Ovary (tissue), 10 donors: ENCODE measurements at regions of chr12 and their contacts with region 1.

Region 1: GRCh38 chr12:106126441-106127337 is 12.1 kb downstream of the NUAK1 start:
- DNase-seq: peak in 1 of 5 donors; percentile 55
- H3K4me3 ChIP-seq: no peak overlapping the region
- H3K27ac ChIP-seq: peak overlapping the region in 1 of 2 donors; percentile 26
- H3K4me1 ChIP-seq: peaks cover 12% of the 10 kb centered on the region
- H3K27me3 ChIP-seq: no peaks in the 10 kb centered on the region
- CTCF ChIP-seq: no peak
- EP300 ChIP-seq: no peak
- POLR2A ChIP-seq: no peak

Region 2: DNA sequence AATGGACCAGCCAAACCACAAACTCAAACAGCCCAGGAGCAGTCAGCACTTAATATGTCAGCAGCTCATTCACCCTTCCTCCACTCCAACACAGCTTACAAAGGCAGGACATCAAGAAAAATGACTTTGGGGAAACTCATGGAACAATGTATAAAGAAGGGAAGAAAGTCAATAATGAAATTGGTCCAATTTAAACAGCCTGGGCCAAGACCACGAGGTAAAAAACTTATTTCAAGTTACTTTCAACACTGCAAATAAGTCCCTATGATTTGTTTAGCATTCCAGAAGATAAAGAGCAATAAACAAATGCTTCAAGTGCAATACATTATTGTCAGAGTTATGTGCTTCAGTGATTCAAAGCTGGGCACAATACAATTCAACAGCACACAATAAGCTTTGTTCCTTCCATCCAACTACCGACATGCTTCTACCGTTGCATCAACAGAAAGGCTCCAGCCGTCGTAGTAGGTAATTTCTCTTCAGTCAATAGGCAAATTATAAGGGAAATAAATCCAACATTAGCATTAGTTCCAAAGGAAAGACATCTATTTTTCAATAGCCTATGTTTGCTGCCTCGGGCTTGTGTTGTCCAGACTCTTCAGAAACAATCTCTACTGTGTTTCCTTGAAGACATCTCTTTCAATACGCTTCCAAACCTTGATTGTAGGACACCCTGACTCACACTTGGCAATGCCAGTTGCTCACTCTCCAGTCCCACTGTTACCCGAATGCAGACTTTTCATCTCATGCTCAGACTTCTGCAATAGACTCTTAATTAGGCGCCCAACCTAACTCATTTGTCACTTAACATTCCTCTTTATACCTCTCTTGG is 213.6 kb before region 1 on chr12:
- intact Hi-C with region 1: no loop called
- DNase-seq: no peak
- H3K4me3 ChIP-seq: no peak overlapping the region
- H3K27ac ChIP-seq: no peak overlapping the region
- H3K4me1 ChIP-seq: no peaks in the 10 kb centered on the region
- H3K27me3 ChIP-seq: no peaks in the 10 kb centered on the region
- CTCF ChIP-seq: no peak
- EP300 ChIP-seq: no peak
- POLR2A ChIP-seq: no peak

Region 3: DNA sequence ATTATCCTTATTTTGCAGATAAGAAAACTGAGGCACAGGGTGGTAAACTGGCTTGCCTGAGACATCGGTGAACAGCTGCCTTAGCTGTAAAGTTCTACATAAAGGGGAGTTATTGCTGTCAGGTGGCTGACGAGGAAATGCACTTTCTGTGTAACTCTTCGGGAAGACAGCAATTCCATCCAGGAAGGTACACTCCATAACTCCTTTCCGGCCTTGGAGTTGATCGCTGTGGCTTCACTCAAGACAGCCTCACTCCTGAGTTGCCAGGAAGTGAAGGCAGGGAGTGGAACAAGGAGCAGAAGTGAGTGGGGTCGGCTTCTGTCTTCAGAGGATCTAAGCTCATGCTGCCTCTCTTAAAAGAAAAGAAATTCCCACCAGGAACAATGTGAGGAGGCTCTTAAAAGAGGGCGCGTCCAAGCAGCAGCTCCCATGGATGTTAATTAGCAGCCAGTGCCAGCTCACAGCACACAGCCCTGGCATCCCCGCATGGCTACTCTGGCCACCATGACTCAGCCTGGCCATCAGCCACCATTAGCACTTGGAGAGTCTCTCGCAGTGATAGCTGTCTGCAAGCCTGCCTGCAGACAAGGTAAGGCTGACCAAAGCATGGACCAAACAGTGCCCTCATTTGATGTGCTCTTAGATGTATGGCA is 48.2 kb before region 1 on chr12:
- intact Hi-C with region 1: loop called in 2 of 4 experiments (anchors 5 to 10 kb)
- DNase-seq: no peak
- H3K4me3 ChIP-seq: no peak overlapping the region
- H3K27ac ChIP-seq: no peak overlapping the region
- H3K4me1 ChIP-seq: peaks cover 8% of the 10 kb centered on the region
- H3K27me3 ChIP-seq: no peaks in the 10 kb centered on the region
- CTCF ChIP-seq: no peak
- EP300 ChIP-seq: no peak
- POLR2A ChIP-seq: no peak